HEK293 (cell line): ENCODE measurements at regions of chr12 and their contacts with region 1.

Region 1: GRCh38 chr12:6909421-6910145 is 4.8 kb upstream of the ENO2 start:
- H3K4me3 ChIP-seq: no peak overlapping the region
- H3K27ac ChIP-seq: no peak overlapping the region
- H3K4me1 ChIP-seq: peaks cover 2% of the 10 kb centered on the region; the same call in 1 of the 2 replicates
- CTCF ChIP-seq: no peak

Region 2: GRCh38 chr12:6745741-6746525 is 163.7 kb before region 1 on chr12:
- CTCF ChIA-PET with region 1: no interaction called
- POLR2A ChIA-PET with region 1: no interaction called
- H3K4me3 ChIP-seq: no peak overlapping the region
- H3K27ac ChIP-seq: no peak overlapping the region
- H3K4me1 ChIP-seq: no peaks in the 10 kb centered on the region
- CTCF ChIP-seq: no peak

Region 3: DNA sequence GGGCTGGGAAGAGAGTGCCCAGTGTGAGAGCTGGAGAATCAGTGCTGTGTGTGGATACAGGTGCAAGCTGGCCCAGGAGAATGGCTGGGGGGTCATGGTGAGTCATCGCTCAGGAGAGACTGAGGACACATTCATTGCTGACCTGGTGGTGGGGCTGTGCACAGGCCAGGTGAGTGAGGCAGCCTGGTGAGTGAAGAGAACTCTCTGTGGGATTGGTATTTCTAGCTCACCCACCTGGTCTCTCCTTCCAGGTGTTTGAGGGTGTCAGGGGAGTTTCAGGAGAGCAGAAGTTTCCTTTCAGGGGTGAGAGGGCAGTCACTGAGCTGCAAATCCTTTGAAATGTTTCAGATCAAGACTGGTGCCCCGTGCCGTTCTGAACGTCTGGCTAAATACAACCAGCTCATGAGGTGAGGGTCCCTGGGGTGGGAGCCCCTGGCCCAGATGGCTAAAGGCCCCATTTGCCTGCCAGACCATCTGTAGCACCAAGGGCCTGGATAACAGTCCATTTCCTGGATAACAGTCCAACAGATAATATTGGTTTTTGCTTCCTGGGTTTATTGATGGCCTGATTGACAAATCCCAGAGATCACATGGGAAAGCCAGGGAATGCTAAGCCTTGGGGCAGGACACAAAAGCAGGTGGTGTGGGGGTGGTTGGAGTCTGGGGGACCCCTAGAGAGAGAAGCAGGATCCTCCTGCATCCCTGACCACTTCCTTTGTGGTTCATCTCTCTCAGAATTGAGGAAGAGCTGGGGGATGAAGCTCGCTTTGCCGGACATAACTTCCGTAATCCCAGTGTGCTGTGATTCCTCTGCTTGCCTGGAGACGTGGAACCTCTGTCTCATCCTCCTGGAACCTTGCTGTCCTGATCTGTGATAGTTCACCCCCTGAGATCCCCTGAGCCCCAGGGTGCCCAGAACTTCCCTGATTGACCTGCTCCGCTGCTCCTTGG is 12.7 kb after region 1 on chr12:
- CTCF ChIA-PET with region 1: interaction called, 17 read pairs
- POLR2A ChIA-PET with region 1: interaction called, 7 read pairs
- H3K4me3 ChIP-seq: no peak overlapping the region
- H3K27ac ChIP-seq: no peak overlapping the region
- H3K4me1 ChIP-seq: peaks cover 28% of the 10 kb centered on the region
- CTCF ChIP-seq: no peak